Gastrocnemius medialis (tissue), 4 donors: ENCODE measurements at regions of chr16 and their contacts with region 1.

Region 1: GRCh38 chr16:31458844-31459721 is at the start of gene ARMC5:
- DNase-seq: peak; percentile 97 to 98
- ATAC-seq: peak; percentile 78 to 82
- H3K4me3 ChIP-seq: peak within 1 kb of the TSS; percentile 77 to 90 (median 86)
- H3K27ac ChIP-seq: peak within 1 kb of the TSS; percentile 90 to 99 (median 94)
- H3K4me1 ChIP-seq: peaks cover 53 to 57% of the 10 kb centered on the region in 2 donors
- H3K27me3 ChIP-seq: no peaks in the 10 kb centered on the region
- CTCF ChIP-seq: peak; percentile 33 to 80 (median 74)
- POLR2A ChIP-seq: peak; percentile 93 to 97
- total RNA-seq, gene ARMC5: 13.9 to 24.3 (median 19.4) TPM

Region 2: DNA sequence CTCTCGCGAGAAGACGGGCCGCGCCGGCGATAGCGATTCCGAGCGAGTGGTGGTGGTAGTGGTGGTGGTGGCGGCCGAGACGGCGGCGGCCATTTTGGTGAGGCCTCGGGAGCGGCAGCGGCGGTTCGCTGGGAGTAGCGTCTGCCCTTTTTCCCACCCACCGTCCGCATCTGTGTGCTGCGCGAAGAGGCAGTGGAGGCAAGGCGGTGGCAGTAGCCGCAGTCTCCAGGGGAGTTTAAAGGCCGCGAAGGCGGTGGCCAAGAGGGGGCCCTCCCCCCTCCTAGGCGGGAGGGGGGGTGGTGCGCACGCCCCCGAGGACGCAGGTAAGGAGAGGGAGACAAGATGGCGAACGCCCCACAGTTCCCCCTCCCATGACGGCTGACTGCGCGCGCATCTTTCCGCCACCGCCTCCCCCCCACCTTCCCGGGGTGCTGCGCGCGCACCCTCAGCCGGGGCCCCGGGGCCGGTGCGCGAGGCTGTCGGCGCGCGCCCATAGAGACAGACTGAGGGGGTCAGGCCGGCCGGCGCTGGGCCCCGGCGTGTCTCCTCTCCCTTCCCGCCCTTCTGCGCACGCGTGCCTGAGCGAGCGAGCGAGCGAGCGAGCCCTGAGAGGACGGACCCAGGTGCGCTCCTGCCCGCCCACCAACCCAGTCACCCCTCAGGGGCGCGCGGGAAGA is 760.8 kb before region 1 on chr16:
- in situ Hi-C with region 1: no loop called
- intact Hi-C with region 1: loop called (anchors 2 kb)
- DNase-seq: peak; percentile 93 to 98
- ATAC-seq: peak; percentile 88 to 92
- H3K4me3 ChIP-seq: peak overlapping the region; percentile 89 to 100 (median 98)
- H3K27ac ChIP-seq: peak overlapping the region; percentile 98 to 100 (median 100)
- H3K4me1 ChIP-seq: peaks cover 26 to 28% of the 10 kb centered on the region in 2 donors
- H3K27me3 ChIP-seq: no peaks in the 10 kb centered on the region
- CTCF ChIP-seq: no peak
- POLR2A ChIP-seq: peak; percentile 84 to 88

Region 3: DNA sequence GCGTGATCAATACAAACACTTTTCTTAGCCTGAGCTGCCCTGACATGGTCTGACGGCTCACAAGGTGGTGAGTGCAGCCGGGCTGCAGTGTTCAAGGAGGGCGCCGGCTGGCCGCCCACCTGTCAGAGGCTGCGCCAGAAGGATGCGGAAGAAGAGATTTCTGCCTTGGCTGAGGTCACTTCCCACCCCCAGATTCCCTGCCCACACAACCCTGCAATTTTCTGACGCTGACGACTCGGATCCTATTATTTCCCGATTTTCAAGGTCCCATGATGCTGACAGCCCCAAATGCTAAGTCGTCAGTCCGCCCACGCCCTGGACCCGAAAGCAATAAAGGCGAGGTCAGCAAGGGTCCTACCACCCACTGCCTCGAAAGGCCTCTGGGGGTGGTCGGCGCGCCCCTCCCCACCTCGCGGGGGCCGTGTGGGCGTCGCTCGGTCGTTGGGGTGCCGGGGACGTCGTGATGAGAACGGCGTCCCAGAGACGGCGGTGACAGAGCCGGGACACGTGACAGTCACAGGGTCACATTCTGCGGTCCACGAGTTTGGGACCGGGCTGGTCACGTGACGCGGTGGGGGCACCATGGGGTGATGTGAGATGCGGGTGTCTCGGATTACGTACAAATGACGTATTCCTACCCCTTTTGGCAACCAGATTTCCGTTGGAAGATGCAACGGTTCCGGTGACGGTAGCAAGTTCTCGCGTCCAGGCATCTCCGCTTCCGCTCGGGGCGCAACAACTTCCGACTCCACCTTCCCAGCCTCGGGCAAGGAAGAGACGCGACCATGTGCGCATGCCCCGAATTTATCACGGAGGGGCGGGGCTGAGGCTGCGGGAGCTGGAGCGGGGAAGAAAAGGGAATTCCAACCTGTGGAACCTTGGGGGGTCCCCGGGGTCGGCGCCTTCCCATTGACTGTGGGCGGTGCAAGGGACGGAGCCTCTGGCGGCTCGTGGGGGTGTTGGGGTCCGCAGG is 426.1 kb before region 1 on chr16 and contains the start of gene STX4:
- in situ Hi-C with region 1: no loop called
- intact Hi-C with region 1: loop called (anchors 5 kb)
- DNase-seq: peak; percentile 97 to 98
- ATAC-seq: peak; percentile 91 to 93
- H3K4me3 ChIP-seq: peak within 1 kb of the TSS; percentile 82 to 99 (median 95)
- H3K27ac ChIP-seq: peak within 1 kb of the TSS; percentile 91 to 98 (median 92)
- H3K4me1 ChIP-seq: peaks cover 8 to 14% of the 10 kb centered on the region in 2 donors
- H3K27me3 ChIP-seq: no peaks in the 10 kb centered on the region
- CTCF ChIP-seq: peak in 3 of 5 experiments; percentile 2 to 54 (median 44)
- POLR2A ChIP-seq: peak; percentile 54 to 68
- total RNA-seq, gene STX4: 14.9 to 24.3 (median 21.4) TPM

Region 4: DNA sequence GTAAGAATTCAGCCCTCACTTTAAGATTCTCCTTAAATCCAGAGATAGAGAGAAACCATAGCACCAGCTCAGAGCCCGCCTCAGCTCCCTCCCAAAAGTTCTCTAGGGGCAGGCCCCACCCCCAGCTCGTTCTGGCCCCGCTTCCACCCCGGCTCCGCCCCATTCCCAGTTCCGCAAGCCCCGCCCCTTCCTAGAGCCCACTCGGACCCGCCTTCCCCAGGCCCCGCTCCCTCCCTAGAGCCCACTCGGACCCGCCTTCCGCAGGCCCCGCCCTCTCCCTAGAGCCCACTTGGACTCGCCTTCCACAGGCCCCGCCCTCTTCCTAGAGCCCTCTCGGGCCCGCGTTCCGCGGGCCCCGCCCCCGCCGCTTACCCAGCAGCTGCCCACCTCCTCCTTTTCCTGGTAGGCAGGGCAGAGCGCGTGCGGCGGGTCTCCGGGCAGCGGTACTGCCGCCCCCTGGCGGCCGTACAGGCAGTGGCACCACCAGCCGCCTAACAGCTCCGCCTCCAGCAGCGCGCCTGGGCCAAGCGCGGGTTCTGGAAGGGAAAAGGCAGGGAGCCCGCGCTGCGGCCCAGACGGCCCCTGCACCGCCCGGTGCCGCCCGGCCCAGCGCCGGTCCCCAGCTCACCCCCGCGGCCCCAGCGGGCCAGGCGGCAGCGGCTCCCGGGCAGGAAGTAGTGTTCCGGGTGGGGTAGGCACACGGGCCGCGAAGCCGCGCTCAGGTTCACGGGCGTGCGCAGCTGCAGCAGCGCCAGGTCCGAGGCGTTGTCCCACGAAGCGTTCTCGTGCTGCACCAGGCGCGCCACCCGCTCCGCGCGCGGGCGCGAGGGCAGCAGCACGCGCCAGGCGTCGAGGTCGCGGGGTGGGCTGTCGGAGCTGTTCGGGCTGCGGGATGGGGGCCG is 316.7 kb before region 1 on chr16:
- in situ Hi-C with region 1: no loop called
- intact Hi-C with region 1: loop called (anchors 2 kb)
- DNase-seq: peak; percentile 97 to 99
- ATAC-seq: peak; percentile 78 to 83
- H3K4me3 ChIP-seq: peak overlapping the region; percentile 42 to 75 (median 58)
- H3K27ac ChIP-seq: peak overlapping the region; percentile 79 to 88 (median 82)
- H3K4me1 ChIP-seq: peaks cover 19 to 22% of the 10 kb centered on the region in 2 donors
- H3K27me3 ChIP-seq: no peaks in the 10 kb centered on the region
- CTCF ChIP-seq: peak; percentile 98 to 100 (median 99)
- POLR2A ChIP-seq: peak; percentile 28 to 46

Region 5: GRCh38 chr16:31507929-31508705 is 49.0 kb after region 1 on chr16 and contains the start of gene RUSF1:
- in situ Hi-C with region 1: loop called in 1 of 4 experiments (anchors 10 kb)
- intact Hi-C with region 1: loop called (anchors 2 kb)
- DNase-seq: peak; percentile 86 to 88
- ATAC-seq: peak; percentile 94 to 95
- H3K4me3 ChIP-seq: peak within 1 kb of the TSS; percentile 74 to 98 (median 87)
- H3K27ac ChIP-seq: peak within 1 kb of the TSS; percentile 88 to 93 (median 91)
- H3K4me1 ChIP-seq: peaks cover 24 to 28% of the 10 kb centered on the region in 2 donors
- H3K27me3 ChIP-seq: no peaks in the 10 kb centered on the region
- CTCF ChIP-seq: peak in 1 of 5 experiments; percentile 12
- POLR2A ChIP-seq: peak; percentile 86 to 89
- total RNA-seq, gene RUSF1: 6.7 to 15.1 (median 8.5) TPM